Upper lobe of right lung (tissue), 1 donor: ENCODE measurements at regions of chr11 and their contacts with region 1.

Region 1: DNA sequence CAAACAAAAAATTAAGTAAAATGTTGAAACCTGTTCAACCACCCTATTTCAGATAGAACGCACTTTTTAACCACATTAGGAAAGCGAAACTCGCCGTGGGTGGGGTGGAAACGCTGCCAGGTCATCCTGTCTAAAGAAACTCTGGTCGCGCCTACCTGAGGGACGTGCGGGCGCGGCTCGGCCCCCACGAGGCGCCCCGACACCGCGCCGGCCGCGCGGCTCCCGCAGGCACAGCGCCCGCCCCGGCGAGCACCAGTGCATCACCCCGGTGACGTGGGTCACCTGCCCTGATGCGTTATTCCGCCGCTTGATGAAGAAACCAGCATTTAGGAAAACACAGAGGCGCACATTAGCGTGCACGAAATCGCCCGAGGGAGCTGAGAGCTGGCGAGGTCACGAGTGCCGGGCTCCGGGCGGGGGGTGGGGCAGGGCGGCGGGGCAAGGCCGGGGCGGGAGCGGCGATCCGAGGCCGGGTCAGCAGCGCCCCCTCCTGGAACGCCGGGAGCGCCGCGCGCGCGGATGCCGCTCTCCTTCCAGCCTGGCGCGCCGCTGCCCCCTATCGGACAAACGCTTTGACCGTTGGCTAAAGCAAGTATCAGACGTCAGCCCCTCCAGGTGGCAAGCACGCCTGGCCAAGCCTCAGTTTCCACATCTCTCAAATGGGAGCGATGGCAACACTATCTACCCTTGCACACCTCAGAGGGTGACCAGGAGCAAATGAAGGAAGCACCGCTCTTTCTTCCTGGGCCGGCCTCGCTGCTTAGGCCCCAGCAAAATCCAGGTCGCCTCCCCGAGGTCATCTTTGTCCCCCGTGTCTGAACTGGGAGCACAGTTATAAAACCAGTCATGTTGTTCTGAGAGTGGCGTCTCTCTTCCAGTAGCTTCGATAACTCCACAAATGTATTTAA is 15.7 kb upstream of the SNX32 start:
- DNase-seq: peak; percentile 97
- ATAC-seq: peak; percentile 97
- H3K4me3 ChIP-seq: peak overlapping the region; percentile 64
- H3K27ac ChIP-seq: peak overlapping the region; percentile 84
- H3K4me1 ChIP-seq: peaks cover 19% of the 10 kb centered on the region
- H3K27me3 ChIP-seq: no peaks in the 10 kb centered on the region
- CTCF ChIP-seq: peak; percentile 99

Region 2: DNA sequence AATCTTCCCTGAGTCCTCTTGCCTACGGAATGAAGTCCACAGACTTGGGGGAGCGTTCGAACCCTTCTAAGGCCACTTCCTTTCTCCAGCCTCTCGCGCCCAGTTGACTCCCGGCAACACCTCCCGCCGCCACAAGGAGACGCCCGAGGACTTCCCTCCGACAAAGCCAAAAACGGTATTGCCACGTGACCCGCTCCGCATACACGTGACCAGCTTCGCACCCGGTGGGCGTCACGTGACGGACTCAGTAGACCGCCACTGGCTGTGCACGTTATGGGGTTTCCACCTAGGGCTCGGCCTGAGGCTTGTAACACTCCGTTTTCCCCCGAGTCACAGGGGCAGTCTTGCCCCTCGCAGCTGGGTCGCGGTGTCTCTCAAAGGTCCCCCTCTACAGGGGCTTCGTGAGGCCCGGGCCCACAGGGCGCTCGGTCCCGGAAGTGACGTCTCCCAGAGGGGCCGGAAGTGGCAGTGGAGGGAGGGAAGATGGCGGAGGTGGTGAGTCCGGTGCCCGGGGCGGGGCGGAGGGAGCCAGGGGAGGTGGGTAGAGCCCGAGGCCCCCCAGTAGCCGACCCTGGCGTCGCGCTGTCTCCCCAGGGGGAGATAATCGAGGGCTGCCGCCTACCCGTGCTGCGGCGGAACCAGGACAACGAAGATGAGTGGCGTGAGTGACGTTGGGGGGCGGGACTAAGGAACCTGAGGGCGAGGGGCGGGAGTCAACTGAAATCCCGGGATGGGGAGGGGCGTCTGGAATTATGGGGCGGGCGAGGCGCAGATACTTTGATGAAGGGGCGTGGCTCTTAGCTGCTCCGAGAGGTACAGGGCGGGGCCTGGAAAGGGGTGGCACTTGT is 106.1 kb before region 1 on chr11 and contains the start of gene KAT5:
- intact Hi-C with region 1: loop called (anchors 10 kb)
- DNase-seq: peak; percentile 99
- ATAC-seq: peak; percentile 91
- H3K4me3 ChIP-seq: peak within 1 kb of the TSS; percentile 65
- H3K27ac ChIP-seq: peak within 1 kb of the TSS; percentile 98
- H3K4me1 ChIP-seq: peaks cover 10% of the 10 kb centered on the region
- H3K27me3 ChIP-seq: no peaks in the 10 kb centered on the region
- CTCF ChIP-seq: peak; percentile 96
- total RNA-seq, gene KAT5: 77.5 TPM